Aorta (tissue), 5 donors: ENCODE measurements at regions of chr13 and their contacts with region 1.

Region 1: DNA sequence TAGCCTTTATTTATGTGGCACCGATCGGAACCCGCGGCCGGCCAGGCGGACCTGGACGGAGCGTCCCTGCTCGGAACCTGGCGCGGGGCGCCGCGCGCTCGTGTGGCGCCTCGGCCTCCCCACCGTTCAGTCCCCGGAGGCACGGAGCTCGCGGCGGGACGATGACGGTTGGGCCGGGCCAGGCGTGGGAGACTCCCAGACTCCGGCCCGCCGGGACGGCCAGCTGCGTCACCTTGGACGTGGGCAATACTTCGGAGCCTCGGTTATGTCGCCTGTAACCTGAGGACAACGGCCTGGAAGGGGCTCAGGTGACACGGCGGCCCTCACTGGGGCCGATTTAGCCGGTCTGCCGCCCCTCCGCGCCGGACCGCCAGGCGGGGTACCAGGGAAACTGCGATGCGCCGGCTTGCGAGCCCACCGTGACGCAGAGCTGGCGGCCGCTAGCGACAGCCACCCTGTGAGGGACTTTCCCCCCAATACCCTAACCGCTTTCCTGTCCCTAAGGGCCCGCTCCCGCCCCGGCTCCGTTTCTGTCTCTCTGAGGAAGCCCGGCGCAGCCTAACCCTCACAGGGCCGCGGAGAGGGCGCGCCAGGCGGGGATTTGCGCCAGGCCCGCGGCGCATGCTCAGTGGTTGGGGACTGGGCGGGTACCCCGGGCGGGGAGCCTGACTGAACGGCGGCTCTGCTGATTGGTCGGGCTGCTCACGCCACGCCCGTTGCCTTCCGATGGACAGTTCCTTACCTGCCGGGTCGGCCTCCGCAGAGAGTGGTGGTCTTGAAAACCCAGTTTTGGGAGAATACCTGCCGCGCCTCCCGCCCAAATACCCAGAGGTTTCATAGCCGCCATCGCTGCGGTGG is 109.5 kb upstream of the DOCK9 start:
- DNase-seq: peak; percentile 93 to 96
- ATAC-seq: peak; percentile 97
- H3K4me3 ChIP-seq: peak overlapping the region; percentile 78 to 89
- H3K27ac ChIP-seq: peak overlapping the region; percentile 86
- H3K4me1 ChIP-seq: peaks cover 0 to 2% of the 10 kb centered on the region in 2 donors
- H3K27me3 ChIP-seq: no peaks in the 10 kb centered on the region

Region 2: DNA sequence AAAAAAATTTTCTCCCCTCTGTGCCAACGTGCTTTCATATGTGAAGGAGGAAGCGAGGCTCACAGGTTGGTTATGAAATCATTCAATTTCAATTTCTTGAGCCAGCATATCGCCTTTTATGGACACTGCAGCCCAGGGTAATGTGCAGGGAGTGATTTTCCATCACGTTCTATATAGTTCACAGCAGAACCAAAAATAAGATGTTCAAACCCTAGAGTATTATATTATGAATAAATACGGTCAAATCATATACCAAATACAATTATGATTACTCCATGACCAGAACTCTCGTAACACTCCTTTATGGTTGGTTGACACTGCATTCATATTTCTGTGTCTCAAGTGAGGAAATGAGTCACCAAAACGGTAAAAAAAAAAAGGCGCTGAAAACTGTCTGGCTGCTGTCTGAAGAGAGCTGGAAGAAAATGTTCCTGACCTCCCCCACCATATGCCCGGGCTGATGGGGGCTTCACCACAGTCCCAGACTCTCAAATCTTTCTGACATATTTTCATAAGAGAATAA is 37.5 kb after region 1 on chr13:
- intact Hi-C with region 1: loop called in 1 of 2 experiments (anchors 2 kb)
- DNase-seq: no peak
- ATAC-seq: no peak
- H3K4me3 ChIP-seq: no peak overlapping the region
- H3K27ac ChIP-seq: peak overlapping the region in 1 of 2 donors; percentile 45
- H3K4me1 ChIP-seq: no peaks in the 10 kb centered on the region
- H3K27me3 ChIP-seq: no peaks in the 10 kb centered on the region

Region 3: GRCh38 chr13:99200432-99201167 is 113.3 kb after region 1 on chr13 and contains the start of gene UBAC2:
- intact Hi-C with region 1: loop called in 1 of 2 experiments (anchors 2 kb)
- DNase-seq: peak; percentile 97 to 98
- ATAC-seq: peak; percentile 98
- H3K4me3 ChIP-seq: peak within 1 kb of the TSS; percentile 92
- H3K27ac ChIP-seq: peak within 1 kb of the TSS; percentile 62 to 90
- H3K4me1 ChIP-seq: no peaks in the 10 kb centered on the region
- H3K27me3 ChIP-seq: no peaks in the 10 kb centered on the region
- total RNA-seq, gene UBAC2: 44.4 to 52.0 TPM